Kidney (tissue), 22 donors: ENCODE measurements at regions of chr21 and their contacts with region 1.

Region 1: DNA sequence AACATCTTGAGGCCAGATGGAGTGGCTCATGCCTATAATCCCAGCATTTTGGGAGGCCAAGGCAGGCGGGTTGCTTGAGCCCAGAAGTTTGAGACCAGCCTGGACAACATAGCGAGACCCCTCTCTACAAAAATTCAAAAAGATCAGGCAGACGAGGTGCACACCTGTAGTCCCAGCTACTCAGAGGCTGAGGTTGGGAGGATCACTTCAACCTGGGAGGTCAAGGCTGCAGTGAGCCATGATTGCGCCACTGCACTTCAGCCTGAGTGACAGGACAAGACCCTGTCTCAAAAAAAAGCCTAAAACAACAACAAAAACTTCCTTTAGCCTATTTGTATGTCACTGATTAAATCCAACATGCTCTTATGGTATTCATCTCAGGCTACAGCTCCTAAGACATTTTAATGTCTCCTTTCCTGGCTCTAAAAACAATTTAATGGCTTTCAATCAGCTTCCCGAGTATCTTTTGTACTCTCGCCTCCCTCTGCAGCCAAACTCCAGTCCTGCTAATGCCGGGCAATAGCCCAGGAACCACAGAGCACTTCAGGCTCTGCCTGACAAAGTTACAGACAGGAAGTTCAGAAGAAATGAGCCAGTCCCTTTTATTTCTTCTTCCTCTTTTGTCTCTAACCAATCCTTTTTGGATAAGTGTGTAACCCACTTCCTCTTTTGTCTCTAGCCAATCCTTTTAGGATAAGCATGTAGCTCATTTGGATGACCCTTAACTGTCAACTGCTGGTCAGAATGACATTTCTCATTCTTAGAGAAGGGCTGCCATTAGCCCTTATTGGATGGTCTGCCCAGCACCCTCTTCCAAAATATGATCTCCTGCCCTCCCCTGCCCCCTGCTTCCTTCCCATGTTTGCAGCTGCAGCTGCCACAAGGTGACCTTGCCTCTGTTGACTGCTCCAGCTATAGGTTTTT is 6.6 kb upstream of the DOP1B start:
- DNase-seq: peak in 3 of 5 donors; percentile 42 to 91 (median 68)
- H3K4me3 ChIP-seq: no peak overlapping the region
- H3K27ac ChIP-seq: peak overlapping the region in 1 of 2 donors; percentile 8
- H3K4me1 ChIP-seq: peaks cover 0 to 9% (median 0%) of the 10 kb centered on the region in 3 donors
- H3K27me3 ChIP-seq: no peaks in the 10 kb centered on the region
- CTCF ChIP-seq: no peak

Region 2: DNA sequence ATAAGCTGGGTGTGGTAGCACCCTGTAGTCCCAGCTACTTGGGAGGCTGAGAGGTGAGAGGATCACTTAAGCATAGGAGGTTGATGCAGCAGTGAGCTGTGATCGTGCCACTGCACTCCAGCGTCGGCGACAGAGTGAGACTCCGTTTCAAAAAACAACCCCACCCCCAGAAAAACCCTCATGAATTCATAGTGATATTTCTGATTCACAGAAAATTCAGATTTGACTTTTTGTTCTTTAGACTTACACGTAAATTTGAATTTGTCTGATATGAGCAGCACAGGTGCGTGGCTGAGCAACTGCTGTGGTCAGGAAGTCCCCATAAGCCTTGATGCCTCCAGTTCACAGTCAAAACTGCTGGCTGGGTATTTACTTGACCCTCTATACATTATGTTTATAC is 160.0 kb after region 1 on chr21:
- intact Hi-C with region 1: no loop called
- DNase-seq: no peak
- H3K4me3 ChIP-seq: no peak overlapping the region
- H3K27ac ChIP-seq: no peak overlapping the region
- H3K4me1 ChIP-seq: no peaks in the 10 kb centered on the region
- H3K27me3 ChIP-seq: no peaks in the 10 kb centered on the region
- CTCF ChIP-seq: no peak

Region 3: DNA sequence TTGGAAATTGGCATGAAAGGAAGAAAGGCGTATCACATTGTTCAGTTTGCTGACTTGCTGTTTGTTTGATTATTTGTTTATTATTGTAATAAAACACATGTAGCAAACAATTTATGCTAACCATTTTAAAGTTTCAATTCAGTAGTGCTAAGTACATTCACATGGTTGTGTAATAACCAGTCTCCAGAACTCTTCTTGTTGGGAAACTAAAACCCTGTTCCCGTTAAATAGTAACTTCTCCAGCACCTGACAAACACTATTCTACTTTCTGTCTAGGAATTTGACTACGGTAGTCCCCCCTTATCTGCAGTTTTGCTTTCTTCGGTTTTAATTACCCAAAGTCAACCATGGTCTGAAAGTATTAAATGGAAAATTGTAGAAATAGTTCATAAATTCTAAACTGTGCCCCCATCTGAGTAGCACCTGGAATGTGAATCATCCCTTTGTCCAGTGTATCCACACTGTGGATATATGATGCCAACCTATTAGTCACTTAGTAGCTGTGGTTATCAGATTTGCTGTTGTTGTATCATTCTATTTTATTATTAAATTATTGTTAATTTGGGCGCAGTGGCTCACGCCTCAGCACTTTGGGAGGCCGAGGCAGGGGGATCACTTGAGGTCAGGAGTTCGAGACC is 175.4 kb after region 1 on chr21:
- intact Hi-C with region 1: loop called (anchors 5 kb)
- DNase-seq: no peak
- H3K4me3 ChIP-seq: no peak overlapping the region
- H3K27ac ChIP-seq: peak overlapping the region in 1 of 2 donors; percentile 47
- H3K4me1 ChIP-seq: peaks cover 0 to 8% (median 6%) of the 10 kb centered on the region in 3 donors
- H3K27me3 ChIP-seq: no peaks in the 10 kb centered on the region
- CTCF ChIP-seq: no peak